Activated naive CD4-positive, alpha-beta T cell treated with anti-CD3 and anti-CD28 coated beads for 36 hours (primary cell): ENCODE measurements at regions of chr11 and their contacts with region 1.

Region 1: DNA sequence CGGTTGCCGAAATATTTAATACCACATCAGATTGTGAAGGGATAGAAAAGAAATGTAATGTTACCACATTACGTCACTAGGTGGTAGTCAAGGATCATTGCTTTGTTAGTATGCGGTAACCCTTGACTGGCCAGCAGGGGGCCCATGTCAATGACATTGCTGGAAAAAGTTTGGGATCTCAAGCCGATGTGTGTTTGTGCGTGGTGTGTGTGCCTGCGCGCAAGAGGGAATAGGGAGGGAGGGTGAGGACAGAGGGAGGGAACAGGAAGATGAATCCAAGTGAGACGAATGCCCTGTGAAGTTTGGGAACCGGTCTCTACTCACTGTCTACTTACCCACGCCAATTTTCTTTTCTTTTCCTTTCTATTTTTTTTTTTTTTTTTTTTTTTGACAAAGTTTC is 10.7 kb upstream of the MRGPRX2 start:
- DNase-seq: peak; percentile 71
- H3K4me3 Mint-ChIP-seq: peak overlapping the region; percentile 57
- H3K27ac Mint-ChIP-seq: no peak overlapping the region
- H3K4me1 Mint-ChIP-seq: peaks cover 2% of the 10 kb centered on the region
- H3K27me3 Mint-ChIP-seq: peaks cover 9% of the 10 kb centered on the region

Region 2: DNA sequence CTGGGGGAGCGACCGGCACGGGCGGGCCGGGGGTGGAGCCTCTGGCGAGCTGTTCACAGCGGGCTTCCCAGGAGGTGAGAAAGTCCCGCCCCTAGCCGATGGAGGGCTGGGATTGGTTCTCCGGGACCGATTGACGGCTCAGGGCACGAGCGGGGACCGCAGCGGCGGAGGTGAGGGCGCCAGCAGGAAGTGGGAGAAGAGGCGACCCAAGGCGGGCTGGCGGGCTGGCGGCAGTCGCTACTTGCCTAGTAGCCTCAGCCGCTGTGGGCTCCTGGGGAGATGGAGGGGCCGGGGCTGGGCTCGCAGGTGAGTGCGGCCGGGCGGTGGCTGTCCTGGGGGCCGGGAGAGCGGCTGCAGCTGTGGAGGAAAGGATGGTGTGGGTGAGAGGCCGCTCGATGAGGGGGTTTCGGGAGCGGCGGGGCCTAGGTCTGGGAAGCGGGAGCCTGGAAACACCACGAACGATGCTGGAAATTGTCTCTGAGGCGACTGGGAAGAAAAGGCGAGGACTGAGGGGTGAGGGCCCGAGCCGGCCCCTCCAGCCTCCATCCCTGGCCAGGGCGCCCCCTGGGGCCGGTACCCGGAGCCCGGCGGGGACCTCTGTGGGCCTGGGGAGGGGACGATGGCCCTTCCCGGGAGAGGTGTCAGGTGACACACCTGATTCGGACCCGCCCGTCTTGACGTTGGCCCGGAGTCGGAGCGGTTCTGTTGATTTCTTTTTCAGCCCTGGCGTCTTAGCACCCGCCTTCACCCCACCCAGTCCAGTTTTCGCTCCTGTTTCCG is 45.9 kb after region 1 on chr11 and contains the start of gene ZDHHC13:
- CTCF ChIA-PET with region 1: interaction called, 7 read pairs
- intact Hi-C with region 1: loop called (anchors 1 kb)
- DNase-seq: peak; percentile 98
- H3K4me3 Mint-ChIP-seq: peak within 1 kb of the TSS; percentile 89
- H3K27ac Mint-ChIP-seq: peak within 1 kb of the TSS; percentile 79
- H3K4me1 Mint-ChIP-seq: peaks cover 49% of the 10 kb centered on the region
- H3K27me3 Mint-ChIP-seq: no peaks in the 10 kb centered on the region
- total RNA-seq, gene ZDHHC13: 20.9 to 25.1 TPM

Region 3: DNA sequence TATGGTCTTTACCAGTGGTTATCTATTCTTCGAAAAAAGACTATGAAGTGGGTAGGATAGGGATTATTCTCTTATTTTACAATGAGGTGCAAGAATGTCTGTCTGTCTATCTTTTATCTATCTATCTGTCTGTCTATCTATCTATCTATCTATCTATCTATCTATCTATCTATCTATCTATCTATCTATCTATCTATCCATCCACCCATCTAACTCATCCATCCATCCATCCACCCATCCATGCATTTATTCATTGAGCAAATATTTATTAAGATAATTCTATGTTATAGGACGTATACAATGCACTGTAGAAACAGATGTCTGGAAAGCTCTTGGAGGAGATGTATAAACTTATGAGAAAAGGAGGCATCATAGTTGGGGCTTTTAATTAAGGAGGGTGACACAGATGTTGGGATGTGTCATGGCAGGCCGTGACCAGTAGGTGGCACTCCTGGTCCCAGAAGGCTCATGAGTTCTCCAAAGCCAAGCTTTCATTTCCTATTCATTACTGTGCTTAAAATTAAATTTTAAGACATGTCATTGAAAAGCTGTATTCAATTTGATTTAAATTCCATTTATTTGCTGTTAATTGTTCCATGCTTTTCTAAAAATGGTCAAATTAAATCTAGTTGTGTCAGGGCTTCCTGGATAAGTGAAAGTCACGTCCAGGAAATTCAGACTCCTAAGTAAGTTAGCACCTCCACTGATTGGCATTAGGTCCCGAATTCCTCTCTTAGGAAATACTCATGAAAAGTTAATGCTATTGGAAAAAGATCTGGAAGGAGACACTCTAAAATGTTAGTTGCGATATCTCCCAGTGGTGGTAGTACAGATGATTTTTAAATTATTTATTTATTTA is 188.5 kb after region 1 on chr11:
- CTCF ChIA-PET with region 1: interaction called, 6 read pairs
- intact Hi-C with region 1: loop called (anchors 1 kb)
- DNase-seq: peak; percentile 82
- H3K4me3 Mint-ChIP-seq: no peak overlapping the region
- H3K27ac Mint-ChIP-seq: no peak overlapping the region
- H3K4me1 Mint-ChIP-seq: no peaks in the 10 kb centered on the region
- H3K27me3 Mint-ChIP-seq: peaks cover 7% of the 10 kb centered on the region

Region 4: GRCh38 chr11:19441752-19442553 is 370.7 kb after region 1 on chr11:
- CTCF ChIA-PET with region 1: no interaction called
- intact Hi-C with region 1: loop called (anchors 5 kb)
- DNase-seq: peak; percentile 84
- H3K4me3 Mint-ChIP-seq: no peak overlapping the region
- H3K27ac Mint-ChIP-seq: no peak overlapping the region
- H3K4me1 Mint-ChIP-seq: peaks cover 11% of the 10 kb centered on the region
- H3K27me3 Mint-ChIP-seq: peaks cover 18% of the 10 kb centered on the region

Region 5: GRCh38 chr11:19723572-19724342 is 652.5 kb after region 1 on chr11:
- CTCF ChIA-PET with region 1: interaction called, 4 read pairs
- intact Hi-C with region 1: loop called (anchors 5 kb)
- DNase-seq: peak; percentile 69
- H3K4me3 Mint-ChIP-seq: no peak overlapping the region
- H3K27ac Mint-ChIP-seq: peak overlapping the region; percentile 84
- H3K4me1 Mint-ChIP-seq: peaks cover 23% of the 10 kb centered on the region
- H3K27me3 Mint-ChIP-seq: no peaks in the 10 kb centered on the region

Region 6: GRCh38 chr11:19892387-19892786 is 821.1 kb after region 1 on chr11:
- CTCF ChIA-PET with region 1: interaction called, 11 read pairs
- intact Hi-C with region 1: no loop called
- DNase-seq: no peak
- H3K4me3 Mint-ChIP-seq: no peak overlapping the region
- H3K27ac Mint-ChIP-seq: no peak overlapping the region
- H3K4me1 Mint-ChIP-seq: no peaks in the 10 kb centered on the region
- H3K27me3 Mint-ChIP-seq: peaks cover 9% of the 10 kb centered on the region